ENCODE measurements at regions of chr17 and their contacts with region 1.

Region 1: DNA sequence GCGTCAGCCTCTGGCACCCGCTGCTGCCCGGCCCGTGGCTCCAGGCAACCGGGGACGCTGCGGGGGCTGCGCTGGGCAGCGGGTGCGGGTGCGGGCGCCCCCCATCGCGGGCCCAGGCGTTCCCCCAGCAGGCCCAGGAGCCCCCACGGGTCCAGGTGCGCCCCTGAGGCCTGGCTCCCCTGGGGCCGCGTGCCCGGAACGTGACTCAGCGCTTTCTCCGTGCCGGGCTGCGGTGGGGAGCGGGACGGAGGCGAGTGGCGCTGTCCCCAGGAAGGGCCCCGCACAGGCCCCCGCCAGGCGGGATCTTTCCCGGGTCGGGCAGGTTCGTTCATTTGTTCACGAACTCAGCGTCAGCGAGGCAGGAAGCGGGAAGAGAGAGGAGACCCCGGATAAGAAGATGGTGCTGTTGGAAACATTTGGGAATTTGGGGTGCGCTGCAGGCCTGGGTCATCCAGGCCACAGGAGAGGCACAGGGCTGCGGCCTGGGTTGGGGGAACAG is 18.4 kb upstream of the EXOC7 start:
- DNase-seq: peak in 1 of 5 donors; percentile 26
- H3K4me3 ChIP-seq: peak overlapping the region; percentile 45
- H3K4me3 Mint-ChIP-seq: peak overlapping the region in 3 of 7 donors; percentile 44 to 82 (median 46)
- H3K27ac ChIP-seq: no peak overlapping the region
- H3K27ac Mint-ChIP-seq: peak overlapping the region in 1 of 8 donors; percentile 61
- H3K4me1 ChIP-seq: peaks cover 6% of the 10 kb centered on the region
- H3K4me1 Mint-ChIP-seq: peaks cover 3 to 15% (median 5%) of the 10 kb centered on the region in 3 donors
- H3K27me3 ChIP-seq: no peaks in the 10 kb centered on the region
- H3K27me3 Mint-ChIP-seq: no peaks in the 10 kb centered on the region

Region 2: DNA sequence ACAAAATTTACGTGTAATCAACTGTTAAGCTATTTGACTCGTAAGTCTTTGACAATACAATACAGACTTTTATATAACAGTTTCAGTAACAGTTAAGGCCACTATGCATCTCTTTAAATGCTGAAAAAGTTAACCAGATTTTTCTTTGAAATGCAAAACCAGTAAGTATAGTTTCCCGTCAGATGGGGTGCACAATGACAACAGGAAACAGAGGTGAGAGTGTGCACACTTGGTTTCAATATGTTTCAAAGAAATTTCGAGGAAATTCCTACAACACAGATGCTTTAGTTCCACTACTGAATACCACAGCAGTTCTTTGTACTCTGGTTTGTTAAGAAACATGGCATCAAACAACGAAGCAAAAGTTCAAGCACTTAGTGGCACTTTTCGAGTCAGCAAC is 69.9 kb after region 1 on chr17:
- CTCF ChIA-PET with region 1: interaction called, 12 read pairs
- POLR2A ChIA-PET with region 1: no interaction called
- DNase-seq: peak in 4 of 5 donors; percentile 8 to 90 (median 70)
- H3K4me3 ChIP-seq: peak overlapping the region; percentile 40
- H3K4me3 Mint-ChIP-seq: peak overlapping the region; percentile 18 to 80 (median 56)
- H3K27ac ChIP-seq: no peak overlapping the region
- H3K27ac Mint-ChIP-seq: peak overlapping the region; percentile 29 to 97 (median 90)
- H3K4me1 ChIP-seq: peaks cover 84% of the 10 kb centered on the region
- H3K4me1 Mint-ChIP-seq: peaks cover 68 to 84% (median 82%) of the 10 kb centered on the region in 3 donors
- H3K27me3 ChIP-seq: no peaks in the 10 kb centered on the region
- H3K27me3 Mint-ChIP-seq: no peaks in the 10 kb centered on the region

Region 3: GRCh38 chr17:76296186-76296585 is 174.2 kb after region 1 on chr17:
- CTCF ChIA-PET with region 1: interaction called, 14 read pairs
- POLR2A ChIA-PET with region 1: no interaction called
- DNase-seq: no peak
- H3K4me3 ChIP-seq: no peak overlapping the region
- H3K4me3 Mint-ChIP-seq: no peak overlapping the region
- H3K27ac ChIP-seq: no peak overlapping the region
- H3K27ac Mint-ChIP-seq: no peak overlapping the region
- H3K4me1 ChIP-seq: no peaks in the 10 kb centered on the region
- H3K4me1 Mint-ChIP-seq: peaks cover 0 to 2% (median 0%) of the 10 kb centered on the region in 3 donors
- H3K27me3 ChIP-seq: no peaks in the 10 kb centered on the region
- H3K27me3 Mint-ChIP-seq: no peaks in the 10 kb centered on the region

Measured in CD8-positive, alpha-beta memory T cell (primary cell).